Heart right ventricle (tissue), 16 donors: ENCODE measurements at regions of chr12 and their contacts with region 1.

Region 1: DNA sequence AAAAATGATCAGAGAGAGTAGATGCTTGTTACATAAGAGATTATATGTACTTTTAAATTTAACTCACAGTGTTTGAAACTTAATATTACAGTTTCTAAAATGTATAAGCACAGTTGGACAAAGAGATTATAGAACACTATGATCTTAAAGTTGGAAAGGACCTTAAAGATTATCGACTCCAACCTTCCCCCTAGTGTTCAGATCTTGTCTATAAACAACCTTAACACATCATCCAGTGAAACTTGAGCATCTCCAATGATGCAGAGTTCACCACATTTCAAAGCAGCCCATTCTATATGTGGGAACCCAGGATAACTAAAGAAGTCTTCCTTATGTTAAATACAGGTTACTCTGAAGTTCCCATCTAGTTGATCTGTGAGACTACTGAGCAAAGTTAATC is 480.8 kb downstream of the RMST start:
- DNase-seq: no peak
- ATAC-seq: no peak
- H3K4me3 ChIP-seq: no peak overlapping the region
- H3K27ac ChIP-seq: no peak overlapping the region
- H3K4me1 ChIP-seq: no peaks in the 10 kb centered on the region
- H3K27me3 ChIP-seq: no peaks in the 10 kb centered on the region
- CTCF ChIP-seq: peak in 1 of 9 donors; percentile 10

Region 2: DNA sequence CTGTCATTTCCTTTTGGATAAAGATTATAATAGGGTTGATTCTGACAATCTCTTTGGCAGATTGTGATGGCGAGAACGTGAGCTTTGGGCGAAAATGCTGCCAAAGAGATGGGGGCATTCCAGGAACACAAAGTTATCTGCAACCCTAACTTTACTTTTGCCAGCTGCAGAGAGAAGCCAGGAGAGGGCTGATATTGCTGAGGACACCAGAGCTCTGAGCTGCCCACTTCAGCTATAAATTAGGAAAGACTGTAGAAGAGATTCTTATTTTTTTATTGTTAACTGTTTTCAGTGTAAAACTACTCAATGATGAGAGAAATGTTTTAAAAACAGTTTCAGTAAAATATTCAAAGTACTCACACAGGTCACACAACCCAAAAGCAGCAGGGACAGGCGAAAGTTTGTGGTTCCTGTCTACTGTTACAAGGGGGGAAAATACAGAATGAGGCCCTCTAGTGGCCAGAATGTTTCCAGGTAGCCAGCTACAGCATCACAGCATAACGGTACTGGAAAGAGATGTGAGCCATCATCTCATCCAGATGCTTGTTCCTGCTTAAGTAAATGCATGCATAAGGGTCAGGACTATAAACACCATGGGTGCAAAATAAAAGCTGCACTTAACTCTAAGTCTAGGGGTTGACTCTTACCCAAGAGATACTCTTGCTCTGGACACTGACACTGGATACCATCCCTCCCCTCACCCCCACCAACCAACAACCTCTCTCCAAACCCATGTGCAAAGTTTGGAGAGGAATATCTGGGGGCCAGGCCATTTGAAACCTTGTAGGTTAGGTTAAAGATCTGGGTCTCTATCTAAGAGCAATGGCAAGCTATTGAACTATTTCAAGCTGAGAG is 17.6 kb after region 1 on chr12:
- intact Hi-C with region 1: no loop called
- DNase-seq: peak in 1 of 2 donors; percentile 9
- ATAC-seq: no peak
- H3K4me3 ChIP-seq: no peak overlapping the region
- H3K27ac ChIP-seq: no peak overlapping the region
- H3K4me1 ChIP-seq: no peaks in the 10 kb centered on the region
- H3K27me3 ChIP-seq: no peaks in the 10 kb centered on the region
- CTCF ChIP-seq: peak in 8 of 9 donors; percentile 10 to 64 (median 48)

Region 3: DNA sequence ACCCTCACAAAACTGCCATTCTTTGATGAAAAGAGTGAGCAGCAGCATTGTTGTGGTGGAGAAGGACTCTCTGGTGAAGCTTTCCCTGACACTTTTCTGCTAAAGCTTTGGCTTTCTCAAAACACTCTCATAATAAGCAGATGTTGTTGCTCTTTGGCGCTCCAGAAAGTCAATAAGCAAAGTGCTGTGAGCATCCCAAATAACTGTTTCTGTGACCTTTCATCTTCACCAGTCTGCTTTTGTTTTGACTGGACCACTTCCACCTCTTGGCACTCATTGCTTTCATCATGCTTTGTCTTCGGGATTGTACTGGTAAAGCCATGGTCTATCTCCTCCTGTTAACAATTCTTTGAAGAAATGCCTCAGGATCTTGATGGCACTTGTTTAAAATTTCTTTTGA is 147.4 kb after region 1 on chr12:
- intact Hi-C with region 1: loop called in 1 of 10 experiments (anchors 10 kb)
- DNase-seq: no peak
- ATAC-seq: no peak
- H3K4me3 ChIP-seq: no peak overlapping the region
- H3K27ac ChIP-seq: no peak overlapping the region
- H3K4me1 ChIP-seq: no peaks in the 10 kb centered on the region
- H3K27me3 ChIP-seq: no peaks in the 10 kb centered on the region
- CTCF ChIP-seq: no peak